ENCODE measurements at regions of chr11 and their contacts with region 1.

Region 1: GRCh38 chr11:1896923-1897322 is 5.2 kb upstream of the PRR33 start:
- DNase-seq: no peak
- ATAC-seq: no peak
- H3K4me3 ChIP-seq: no peak overlapping the region
- H3K4me3 Mint-ChIP-seq: peak overlapping the region; percentile 22
- H3K27ac ChIP-seq: no peak overlapping the region
- H3K27ac Mint-ChIP-seq: no peak overlapping the region
- H3K4me1 ChIP-seq: peaks cover 7% of the 10 kb centered on the region
- H3K4me1 Mint-ChIP-seq: peaks cover 21% of the 10 kb centered on the region
- H3K27me3 ChIP-seq: no peaks in the 10 kb centered on the region
- H3K27me3 Mint-ChIP-seq: peaks cover 17% of the 10 kb centered on the region
- CTCF ChIP-seq: no peak

Region 2: DNA sequence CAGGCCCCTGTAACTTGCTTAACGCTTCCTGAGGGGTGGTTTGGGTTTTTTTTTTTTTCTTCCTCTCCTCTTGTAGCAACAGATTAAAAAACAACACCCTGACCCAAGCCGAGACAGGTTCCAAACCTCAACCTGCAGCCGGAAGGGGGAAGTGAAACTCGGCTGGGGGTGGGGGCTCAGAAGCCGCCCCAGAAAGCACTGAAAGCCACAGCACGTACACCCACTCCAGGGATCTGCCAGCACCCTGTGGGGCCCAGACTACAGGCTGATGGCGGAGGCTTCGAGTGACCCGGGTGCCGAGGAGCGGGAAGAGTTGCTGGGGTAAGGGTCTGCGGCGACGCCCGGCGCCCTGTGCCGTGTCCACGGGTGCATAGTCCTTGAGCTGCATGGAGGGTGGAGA is 44.0 kb before region 1 on chr11 and contains the start of gene LSP1:
- CTCF ChIA-PET with region 1: no interaction called
- POLR2A ChIA-PET with region 1: no interaction called
- intact Hi-C with region 1: no loop called
- DNase-seq: peak; percentile 64 to 96 (median 86)
- ATAC-seq: peak; percentile 65
- H3K4me3 ChIP-seq: peak within 1 kb of the TSS; percentile 81 to 100
- H3K4me3 Mint-ChIP-seq: peak within 1 kb of the TSS; percentile 94
- H3K27ac ChIP-seq: peak within 1 kb of the TSS; percentile 90 to 91
- H3K27ac Mint-ChIP-seq: peak within 1 kb of the TSS; percentile 92
- H3K4me1 ChIP-seq: peaks cover 81% of the 10 kb centered on the region
- H3K4me1 Mint-ChIP-seq: peaks cover 67% of the 10 kb centered on the region
- H3K27me3 ChIP-seq: no peaks in the 10 kb centered on the region
- H3K27me3 Mint-ChIP-seq: no peaks in the 10 kb centered on the region
- CTCF ChIP-seq: no peak
- total RNA-seq, gene LSP1: 190 to 191 TPM

Region 3: DNA sequence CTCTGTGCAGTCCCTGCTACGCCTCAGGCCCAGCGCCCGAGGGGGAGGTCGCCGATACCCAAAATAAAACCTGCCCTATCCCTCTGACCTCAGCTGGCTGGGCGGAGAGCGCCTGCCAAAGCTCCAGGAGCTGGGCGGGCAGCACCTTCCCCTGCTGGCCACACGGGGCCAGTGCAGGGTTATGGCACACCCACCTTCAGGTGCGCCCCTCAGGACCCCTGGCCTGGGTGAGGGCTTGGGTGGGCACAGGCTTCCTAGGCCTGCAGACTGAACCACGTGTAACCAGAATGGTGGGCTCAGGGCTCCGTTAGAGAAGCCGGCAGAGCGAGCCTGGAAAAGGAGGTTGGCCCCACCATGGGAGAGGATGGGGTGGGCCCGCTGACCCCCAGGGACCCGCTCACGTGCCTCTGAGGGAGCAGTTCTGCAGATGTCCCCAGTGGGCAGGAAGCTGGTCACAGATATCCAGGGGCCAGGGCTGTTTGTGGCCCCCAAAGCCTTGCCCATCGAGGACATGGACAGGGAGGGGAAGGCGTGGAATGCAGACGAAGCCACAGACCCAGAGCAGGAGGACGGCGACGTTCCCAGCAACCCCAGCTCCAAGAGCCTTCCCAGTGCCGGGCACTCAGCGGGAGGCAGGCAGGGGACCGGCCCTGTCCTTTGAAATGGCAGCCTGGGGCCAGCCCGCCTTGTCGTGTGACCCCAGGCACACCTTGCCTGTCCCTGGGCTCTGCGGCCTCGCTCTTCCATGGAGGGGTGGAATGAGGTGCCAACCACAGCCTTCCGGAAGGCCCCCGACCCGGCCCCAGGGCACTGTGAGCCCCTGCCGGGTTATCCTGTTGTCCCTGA is 21.0 kb after region 1 on chr11:
- CTCF ChIA-PET with region 1: interaction called, 14 read pairs
- POLR2A ChIA-PET with region 1: interaction called, 24 read pairs
- intact Hi-C with region 1: loop called in 1 of 2 experiments (anchors 1 kb)
- DNase-seq: peak in 2 of 9 experiments; percentile 31 to 44
- ATAC-seq: peak; percentile 54
- H3K4me3 ChIP-seq: no peak overlapping the region
- H3K4me3 Mint-ChIP-seq: no peak overlapping the region
- H3K27ac ChIP-seq: no peak overlapping the region
- H3K27ac Mint-ChIP-seq: no peak overlapping the region
- H3K4me1 ChIP-seq: peaks cover 11% of the 10 kb centered on the region
- H3K4me1 Mint-ChIP-seq: peaks cover 26% of the 10 kb centered on the region
- H3K27me3 ChIP-seq: peaks cover 0 to 2% of the 10 kb centered on the region in 2 experiments
- H3K27me3 Mint-ChIP-seq: peaks cover 11% of the 10 kb centered on the region
- CTCF ChIP-seq: peak; percentile 29

Region 4: GRCh38 chr11:1943977-1944376 is 47.1 kb after region 1 on chr11:
- CTCF ChIA-PET with region 1: no interaction called
- POLR2A ChIA-PET with region 1: no interaction called
- intact Hi-C with region 1: loop called in 1 of 2 experiments (anchors 1 kb)
- DNase-seq: peak in 1 of 9 experiments; percentile 40
- ATAC-seq: no peak
- H3K4me3 ChIP-seq: no peak overlapping the region
- H3K4me3 Mint-ChIP-seq: no peak overlapping the region
- H3K27ac ChIP-seq: no peak overlapping the region
- H3K27ac Mint-ChIP-seq: no peak overlapping the region
- H3K4me1 ChIP-seq: peaks cover 3% of the 10 kb centered on the region
- H3K4me1 Mint-ChIP-seq: peaks cover 5% of the 10 kb centered on the region
- H3K27me3 ChIP-seq: no peaks in the 10 kb centered on the region
- H3K27me3 Mint-ChIP-seq: no peaks in the 10 kb centered on the region
- CTCF ChIP-seq: no peak

Region 5: GRCh38 chr11:1953489-1954266 is 56.8 kb after region 1 on chr11:
- CTCF ChIA-PET with region 1: interaction called, 10 read pairs
- POLR2A ChIA-PET with region 1: no interaction called
- intact Hi-C with region 1: no loop called
- DNase-seq: peak in 2 of 9 experiments; percentile 15 to 18
- ATAC-seq: peak; percentile 77
- H3K4me3 ChIP-seq: no peak overlapping the region
- H3K4me3 Mint-ChIP-seq: no peak overlapping the region
- H3K27ac ChIP-seq: no peak overlapping the region
- H3K27ac Mint-ChIP-seq: no peak overlapping the region
- H3K4me1 ChIP-seq: no peaks in the 10 kb centered on the region
- H3K4me1 Mint-ChIP-seq: no peaks in the 10 kb centered on the region
- H3K27me3 ChIP-seq: no peaks in the 10 kb centered on the region
- H3K27me3 Mint-ChIP-seq: no peaks in the 10 kb centered on the region
- CTCF ChIP-seq: no peak

Region 6: DNA sequence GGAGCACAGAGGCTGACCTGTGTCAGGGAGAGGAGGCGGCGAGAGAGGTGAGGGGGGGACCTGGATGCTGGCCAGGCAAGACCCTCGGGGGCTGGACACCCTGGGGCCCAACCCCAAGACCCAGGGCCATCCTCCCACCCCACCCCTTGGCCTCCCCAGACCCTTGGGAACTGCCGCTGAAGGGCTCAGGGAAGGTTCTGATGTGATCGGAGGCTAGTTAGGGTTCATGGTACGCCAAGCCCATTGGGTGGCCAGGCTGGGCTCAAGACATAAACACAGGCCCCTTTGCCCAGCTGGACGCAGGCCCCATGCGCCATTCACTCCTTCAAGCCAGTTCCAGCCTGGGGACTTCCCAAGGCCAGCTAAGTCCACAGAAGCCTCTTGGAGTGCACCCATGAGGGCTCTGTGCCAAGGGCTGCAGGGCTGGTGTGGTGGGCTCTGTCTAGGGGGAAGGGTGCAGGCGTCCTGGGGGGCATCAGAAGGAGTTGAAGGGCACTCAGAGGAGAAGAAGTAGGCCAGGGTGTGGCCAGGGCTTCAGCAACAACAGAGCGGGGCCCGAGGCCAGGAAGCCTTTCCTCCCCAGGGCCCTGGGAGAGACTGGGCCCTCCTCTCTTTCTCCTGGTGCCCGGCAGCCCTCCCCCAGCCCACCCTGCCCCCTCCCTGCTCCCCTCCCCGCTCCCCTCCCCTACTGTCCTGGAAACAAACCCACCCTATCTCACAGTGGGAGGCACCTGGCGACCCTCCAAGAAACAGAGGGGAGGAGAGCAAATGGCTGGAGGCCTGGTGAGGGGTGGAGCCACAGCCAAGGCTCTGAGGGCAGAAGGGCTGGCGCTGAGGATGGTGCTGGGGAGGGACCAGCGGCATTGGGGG is 417.8 kb after region 1 on chr11:
- CTCF ChIA-PET with region 1: no interaction called
- POLR2A ChIA-PET with region 1: no interaction called
- intact Hi-C with region 1: no loop called
- DNase-seq: peak in 1 of 9 experiments; percentile 7
- ATAC-seq: no peak
- H3K4me3 ChIP-seq: no peak overlapping the region
- H3K4me3 Mint-ChIP-seq: no peak overlapping the region
- H3K27ac ChIP-seq: no peak overlapping the region
- H3K27ac Mint-ChIP-seq: peak overlapping the region; percentile 60
- H3K4me1 ChIP-seq: peaks cover 41% of the 10 kb centered on the region
- H3K4me1 Mint-ChIP-seq: peaks cover 25% of the 10 kb centered on the region
- H3K27me3 ChIP-seq: no peaks in the 10 kb centered on the region
- H3K27me3 Mint-ChIP-seq: no peaks in the 10 kb centered on the region
- CTCF ChIP-seq: no peak